ENCODE measurements at regions of chr13 and their contacts with region 1.

Region 1: DNA sequence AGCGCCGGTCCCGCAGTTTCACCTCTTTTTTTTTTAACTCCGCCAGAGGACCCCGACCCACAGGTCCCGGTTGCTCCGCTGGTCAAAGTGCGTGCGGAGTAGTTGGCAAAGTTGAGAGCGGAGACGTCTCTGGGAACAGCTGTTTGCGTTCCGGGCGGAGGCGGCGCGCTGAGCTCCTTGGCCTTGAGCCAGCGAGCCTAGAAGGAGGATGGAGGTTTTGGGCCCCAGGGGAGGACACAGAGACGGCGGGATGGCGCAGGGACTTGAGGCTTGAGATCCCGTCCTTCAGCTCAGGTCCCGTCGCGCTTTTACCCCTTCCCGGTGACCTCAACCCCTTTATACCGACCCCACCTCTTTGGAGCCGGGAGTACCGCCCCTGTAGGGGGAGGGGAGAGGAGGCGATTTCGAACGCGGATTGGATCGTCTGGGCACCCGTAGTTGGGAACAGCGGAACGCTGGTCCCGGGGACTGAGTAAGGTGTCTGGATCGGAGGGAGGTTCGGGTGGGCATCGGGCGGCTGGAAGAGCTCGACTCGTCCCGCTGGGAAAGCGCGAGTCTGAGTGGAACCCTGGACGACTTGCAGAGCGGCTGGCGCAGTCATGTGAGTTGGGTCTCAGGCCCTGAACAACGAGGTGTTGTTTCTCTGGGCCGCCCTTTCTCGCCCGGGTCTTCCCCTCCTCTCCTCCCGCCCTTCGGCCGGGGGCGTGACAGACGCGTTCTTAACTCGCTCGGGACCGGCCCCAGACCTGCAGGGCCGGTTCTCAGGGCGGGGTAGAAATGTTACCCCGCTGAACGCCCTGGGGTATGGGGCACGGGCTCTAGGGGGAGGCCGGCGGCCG is at the start of gene WBP4:
- H3K4me3 Mint-ChIP-seq: peak within 1 kb of the TSS; percentile 99
- H3K27ac Mint-ChIP-seq: peak within 1 kb of the TSS; percentile 100
- H3K4me1 Mint-ChIP-seq: peaks cover 40% of the 10 kb centered on the region
- H3K27me3 Mint-ChIP-seq: no peaks in the 10 kb centered on the region

Region 2: DNA sequence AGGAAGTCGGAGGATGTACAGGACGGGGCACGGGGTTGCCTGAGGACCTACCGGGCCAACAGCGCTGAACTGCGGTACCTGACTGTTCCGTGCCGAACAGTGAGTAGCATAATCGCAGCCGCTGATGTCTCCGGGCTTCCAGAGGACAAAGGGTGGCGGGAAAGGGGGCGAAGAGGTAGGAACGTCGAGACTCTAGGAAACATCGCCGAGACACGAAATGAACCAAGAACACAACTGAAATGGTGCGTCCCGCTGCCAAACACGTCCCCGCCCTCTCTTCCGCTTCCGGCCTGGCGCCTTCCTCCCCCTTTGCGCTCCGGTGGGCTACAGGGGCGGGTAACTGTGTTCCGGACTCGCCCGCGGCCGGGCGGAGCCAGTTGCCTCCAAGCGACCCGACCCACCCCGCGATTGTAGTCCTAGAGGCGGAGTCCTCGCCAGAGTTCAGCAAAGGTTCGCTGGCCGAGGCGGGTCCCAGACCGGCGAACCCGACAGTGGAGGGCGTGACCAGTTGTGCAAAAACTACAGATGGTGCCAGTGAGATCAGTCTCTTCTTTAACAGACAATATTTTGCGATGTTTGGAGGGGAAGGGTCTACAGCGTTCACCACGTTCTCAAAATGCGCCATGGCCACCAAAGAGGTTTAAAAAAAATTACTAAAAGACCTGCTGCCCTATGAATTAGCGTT is 290.2 kb before region 1 on chr13 and contains the start of gene MRPS31:
- intact Hi-C with region 1: loop called (anchors 5 kb)
- H3K4me3 Mint-ChIP-seq: peak within 1 kb of the TSS; percentile 95
- H3K27ac Mint-ChIP-seq: peak within 1 kb of the TSS; percentile 95
- H3K4me1 Mint-ChIP-seq: peaks cover 13% of the 10 kb centered on the region
- H3K27me3 Mint-ChIP-seq: no peaks in the 10 kb centered on the region

Region 3: GRCh38 chr13:40969169-40969901 is 92.0 kb before region 1 on chr13:
- intact Hi-C with region 1: loop called (anchors 5 kb)
- H3K4me3 Mint-ChIP-seq: no peak overlapping the region
- H3K27ac Mint-ChIP-seq: peak overlapping the region; percentile 70
- H3K4me1 Mint-ChIP-seq: peaks cover 65% of the 10 kb centered on the region
- H3K27me3 Mint-ChIP-seq: no peaks in the 10 kb centered on the region

Region 4: DNA sequence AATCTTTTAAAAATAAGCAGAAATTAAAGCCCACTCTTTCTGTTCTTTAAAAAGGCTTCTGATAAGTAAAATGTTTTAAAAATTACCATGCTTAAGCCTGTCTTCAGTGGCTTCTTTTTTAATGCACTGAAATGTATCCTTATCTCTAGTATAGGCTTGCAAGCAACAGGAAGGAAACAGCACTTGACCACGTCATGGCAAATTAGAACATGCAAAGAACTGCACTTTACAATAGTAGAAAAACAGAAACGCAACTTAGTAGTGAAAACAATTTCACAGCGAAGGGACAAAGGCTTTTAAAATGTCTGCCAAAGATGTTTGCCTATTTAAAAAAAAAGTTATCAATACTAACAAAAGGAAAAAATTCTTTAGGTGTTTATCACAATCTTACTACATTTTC is 78.5 kb before region 1 on chr13:
- intact Hi-C with region 1: loop called (anchors 5 kb)
- H3K4me3 Mint-ChIP-seq: no peak overlapping the region
- H3K27ac Mint-ChIP-seq: peak overlapping the region; percentile 89
- H3K4me1 Mint-ChIP-seq: peaks cover 58% of the 10 kb centered on the region
- H3K27me3 Mint-ChIP-seq: no peaks in the 10 kb centered on the region

Region 5: DNA sequence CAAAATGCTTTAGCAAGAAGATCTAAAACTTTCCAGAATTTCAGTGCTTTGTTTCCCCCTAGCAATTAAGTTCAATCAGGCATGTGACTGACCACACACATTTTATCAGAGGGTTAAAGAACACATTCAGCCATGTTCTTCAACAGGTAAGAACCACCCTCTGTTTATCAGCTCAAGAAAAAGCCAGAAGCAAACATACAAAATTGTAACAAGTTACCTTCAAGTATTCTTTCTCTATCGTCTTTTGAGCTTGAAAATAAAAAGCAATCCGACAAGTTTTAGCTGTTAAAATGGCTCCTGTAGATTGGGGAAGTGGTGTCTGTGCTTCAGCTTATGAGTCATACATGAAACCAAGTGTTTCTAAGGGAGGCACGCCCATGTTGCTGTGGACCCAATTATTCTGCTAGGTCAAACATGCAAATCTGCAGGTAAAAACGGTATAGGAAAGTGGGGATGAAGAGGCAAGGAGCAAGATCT is 42.2 kb before region 1 on chr13 and contains the start of gene ELF1:
- intact Hi-C with region 1: loop called (anchors 2 kb)
- H3K4me3 Mint-ChIP-seq: peak within 1 kb of the TSS; percentile 81
- H3K27ac Mint-ChIP-seq: peak within 1 kb of the TSS; percentile 96
- H3K4me1 Mint-ChIP-seq: peaks cover 44% of the 10 kb centered on the region
- H3K27me3 Mint-ChIP-seq: no peaks in the 10 kb centered on the region

Region 6: DNA sequence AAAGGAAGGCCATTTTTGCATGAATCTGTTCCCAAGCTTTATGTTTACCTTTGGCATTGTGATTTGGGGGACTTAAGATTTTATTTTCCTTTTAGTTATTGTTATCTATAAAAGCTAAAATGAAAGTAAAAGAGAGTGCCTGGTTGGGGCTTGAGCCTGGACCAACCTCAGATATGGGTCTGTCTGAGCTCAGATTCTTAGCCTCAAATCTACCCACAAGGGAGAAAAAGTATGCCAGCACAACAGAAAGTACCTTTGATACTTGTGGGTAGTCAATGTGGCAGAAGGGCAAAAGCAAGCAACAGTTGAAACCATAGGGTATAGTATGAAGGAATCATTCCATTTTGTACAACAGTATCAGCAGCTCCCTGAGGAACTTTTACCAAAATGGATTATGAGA is 97.9 kb after region 1 on chr13:
- intact Hi-C with region 1: no loop called
- H3K4me3 Mint-ChIP-seq: no peak overlapping the region
- H3K27ac Mint-ChIP-seq: no peak overlapping the region
- H3K4me1 Mint-ChIP-seq: no peaks in the 10 kb centered on the region
- H3K27me3 Mint-ChIP-seq: no peaks in the 10 kb centered on the region

Region 7: DNA sequence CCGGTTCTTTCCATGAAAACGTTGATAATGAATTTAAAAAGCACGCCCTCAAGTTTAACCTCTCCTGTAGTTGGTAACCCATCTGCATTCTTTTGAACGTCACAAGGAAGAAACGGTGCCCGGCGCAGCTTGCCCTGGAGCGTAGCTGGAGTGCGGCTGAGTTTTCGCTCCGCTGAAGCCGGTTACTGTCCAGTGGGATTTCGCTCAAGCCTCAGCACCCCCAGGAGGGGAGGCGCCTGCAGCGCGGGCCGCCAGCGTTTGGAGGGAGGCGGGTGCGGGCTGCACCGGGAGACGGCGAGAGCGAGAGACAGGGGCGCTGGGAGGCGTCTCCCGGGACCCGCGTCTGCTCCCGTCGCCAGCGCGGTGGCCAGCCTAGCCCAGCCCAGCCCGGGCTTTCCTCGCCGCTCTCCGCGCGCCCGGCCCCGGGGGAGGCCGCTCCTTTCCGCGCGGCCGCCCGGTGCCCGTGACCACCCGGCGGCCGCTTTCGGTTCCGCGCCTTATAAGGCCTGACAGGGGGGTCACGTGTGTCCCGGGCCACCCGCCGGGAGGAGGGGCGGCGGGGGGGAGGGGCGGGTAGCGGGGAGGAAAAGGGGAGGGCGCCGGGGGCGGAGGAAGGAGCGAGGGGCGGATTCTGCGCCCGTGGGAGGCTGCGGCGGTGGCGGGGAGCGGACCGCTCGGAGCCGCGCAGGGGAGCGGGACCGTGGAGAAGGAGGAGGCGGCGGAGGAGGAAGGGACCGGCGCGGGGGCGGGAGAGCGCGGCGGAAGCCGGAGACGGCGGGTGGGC is 978.8 kb after region 1 on chr13:
- intact Hi-C with region 1: loop called (anchors 5 kb)
- H3K4me3 Mint-ChIP-seq: peak overlapping the region; percentile 92
- H3K27ac Mint-ChIP-seq: peak overlapping the region; percentile 76
- H3K4me1 Mint-ChIP-seq: peaks cover 23% of the 10 kb centered on the region
- H3K27me3 Mint-ChIP-seq: peaks cover 44% of the 10 kb centered on the region